OCI-LY7 (cell line): ENCODE measurements at regions of chr17 and their contacts with region 1.

Region 1: GRCh38 chr17:67922503-67922902 is 73.8 kb downstream of the C17orf58 start:
- DNase-seq: no peak
- H3K4me3 ChIP-seq: no peak overlapping the region
- H3K27ac ChIP-seq: no peak overlapping the region
- H3K4me1 ChIP-seq: no peaks in the 10 kb centered on the region
- CTCF ChIP-seq: no peak

Region 2: GRCh38 chr17:67746704-67747571 is 175.6 kb before region 1 on chr17:
- CTCF ChIA-PET with region 1: no interaction called
- POLR2A ChIA-PET with region 1: no interaction called
- intact Hi-C with region 1: loop called (anchors 10 kb)
- DNase-seq: no peak
- H3K4me3 ChIP-seq: no peak overlapping the region
- H3K27ac ChIP-seq: no peak overlapping the region
- H3K4me1 ChIP-seq: peaks cover 7% of the 10 kb centered on the region
- CTCF ChIP-seq: no peak